Mammary epithelial cell (primary cell): ENCODE measurements at regions of chr6 and their contacts with region 1.

Region 1: GRCh38 chr6:118501765-118502164 is 46.3 kb upstream of the PLN start:
- DNase-seq: no peak
- H3K4me3 ChIP-seq: no peak overlapping the region
- H3K27ac ChIP-seq: no peak overlapping the region
- H3K4me1 ChIP-seq: no peaks in the 10 kb centered on the region
- H3K27me3 ChIP-seq: no peaks in the 10 kb centered on the region
- CTCF ChIP-seq: no peak

Region 2: GRCh38 chr6:117585647-117586046 is 916.1 kb before region 1 on chr6:
- CTCF ChIA-PET with region 1: no interaction called
- dilution Hi-C with region 1: no loop called
- in situ Hi-C with region 1: no loop called
- intact Hi-C with region 1: loop called (anchors 5 kb)
- DNase-seq: no peak
- H3K4me3 ChIP-seq: no peak overlapping the region
- H3K27ac ChIP-seq: no peak overlapping the region
- H3K4me1 ChIP-seq: no peaks in the 10 kb centered on the region
- H3K27me3 ChIP-seq: no peaks in the 10 kb centered on the region
- CTCF ChIP-seq: no peak

Region 3: DNA sequence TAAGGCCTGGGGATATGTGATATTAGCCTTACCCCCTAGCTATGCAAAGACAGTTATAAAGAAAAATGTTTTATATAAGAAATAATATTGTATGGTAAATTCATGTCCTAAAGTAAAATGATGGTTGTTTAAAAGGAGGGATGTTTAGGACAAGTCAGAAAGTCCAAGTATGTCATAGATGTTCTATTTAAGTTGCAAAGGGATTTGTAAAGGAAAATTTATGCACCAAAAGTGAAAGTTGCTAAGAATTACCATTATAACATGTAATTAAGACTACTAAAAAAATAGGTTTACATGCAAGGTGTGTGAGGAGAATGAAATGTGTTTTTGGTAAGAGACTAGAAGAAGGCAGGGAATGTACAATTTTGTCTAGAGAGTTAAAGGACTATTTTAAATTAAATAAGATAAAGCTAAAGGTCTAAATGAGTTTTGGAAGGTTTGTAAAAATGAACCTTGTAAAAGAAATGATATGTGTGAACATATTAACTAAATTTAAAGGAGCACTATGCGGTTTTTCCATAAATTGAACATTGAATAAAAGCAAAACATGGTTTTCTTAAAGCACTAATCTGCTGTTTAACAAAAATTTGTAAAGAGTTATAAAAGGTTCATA is 876.8 kb before region 1 on chr6:
- CTCF ChIA-PET with region 1: no interaction called
- dilution Hi-C with region 1: no loop called
- in situ Hi-C with region 1: no loop called
- intact Hi-C with region 1: no loop called
- DNase-seq: no peak
- H3K4me3 ChIP-seq: no peak overlapping the region
- H3K27ac ChIP-seq: no peak overlapping the region
- H3K4me1 ChIP-seq: no peaks in the 10 kb centered on the region
- H3K27me3 ChIP-seq: no peaks in the 10 kb centered on the region
- CTCF ChIP-seq: no peak

Region 4: DNA sequence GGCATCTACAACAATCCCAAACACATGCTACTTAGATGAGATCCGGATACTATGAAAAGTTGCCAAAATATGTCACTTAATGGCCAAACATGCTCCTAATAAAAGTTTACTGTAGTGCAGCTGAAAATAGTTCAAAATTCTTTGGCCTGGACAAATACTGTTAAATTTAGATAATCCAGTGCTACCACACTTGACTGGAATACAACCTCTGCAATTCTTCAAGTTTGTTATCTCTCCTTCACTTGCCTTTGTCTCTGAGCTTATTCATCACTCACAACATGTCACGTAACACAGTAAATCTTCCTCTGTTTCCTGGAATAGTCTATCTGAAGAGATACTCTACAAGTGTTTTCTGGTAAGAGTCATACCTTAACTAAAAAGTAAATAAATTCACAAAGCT is 35.8 kb after region 1 on chr6:
- CTCF ChIA-PET with region 1: no interaction called
- dilution Hi-C with region 1: no loop called
- in situ Hi-C with region 1: no loop called
- intact Hi-C with region 1: no loop called
- DNase-seq: no peak
- H3K4me3 ChIP-seq: no peak overlapping the region
- H3K27ac ChIP-seq: no peak overlapping the region
- H3K4me1 ChIP-seq: peaks cover 3% of the 10 kb centered on the region
- H3K27me3 ChIP-seq: no peaks in the 10 kb centered on the region
- CTCF ChIP-seq: no peak